Dorsolateral prefrontal cortex (tissue), 120 donors: ENCODE measurements at regions of chr10 and their contacts with region 1.

Region 1: DNA sequence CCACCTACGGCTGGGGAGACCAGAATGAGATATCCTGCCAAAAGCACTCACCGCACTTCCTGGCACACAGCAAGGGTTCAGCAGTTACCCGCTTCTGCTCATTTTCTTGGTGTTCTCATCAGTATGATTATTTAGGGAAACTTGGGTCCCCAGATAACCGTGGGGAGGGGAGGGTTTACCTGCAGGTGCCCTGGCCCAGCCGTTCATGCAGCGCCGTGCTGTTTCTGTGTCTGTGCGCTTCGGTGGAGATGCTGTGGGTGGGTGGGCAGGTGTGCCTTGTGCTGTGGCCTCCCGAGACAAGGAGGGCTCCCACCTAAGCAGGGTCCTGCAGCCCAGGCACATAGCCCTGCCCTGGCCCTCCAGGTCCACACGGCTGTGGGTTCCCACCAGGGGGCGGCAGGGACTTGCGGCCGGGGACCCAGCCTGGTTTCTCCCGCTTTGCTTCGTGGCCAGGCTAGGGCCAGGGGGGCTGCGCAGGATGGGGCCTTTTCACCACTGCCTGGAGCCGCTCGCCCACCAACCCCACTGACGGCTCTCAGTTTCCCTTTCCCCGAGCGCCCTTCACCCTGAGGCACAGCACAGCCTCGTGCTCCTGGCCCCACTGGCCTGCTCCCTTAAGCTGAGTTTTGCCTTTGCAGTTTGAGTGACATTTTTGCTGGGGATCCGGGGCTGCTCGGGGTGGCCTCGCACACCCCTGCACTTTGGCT is 78.5 kb downstream of the LHPP start:
- DNase-seq: peak in 7 of 10 donors; percentile 55 to 81 (median 63)
- H3K4me3 ChIP-seq: no peak overlapping the region
- H3K27ac ChIP-seq: peak overlapping the region in 27 of 59 donors; percentile 3 to 79 (median 42)
- H3K27me3 ChIP-seq: no peaks in the 10 kb centered on the region
- CTCF ChIP-seq: peak; percentile 16 to 93 (median 72)

Region 2: DNA sequence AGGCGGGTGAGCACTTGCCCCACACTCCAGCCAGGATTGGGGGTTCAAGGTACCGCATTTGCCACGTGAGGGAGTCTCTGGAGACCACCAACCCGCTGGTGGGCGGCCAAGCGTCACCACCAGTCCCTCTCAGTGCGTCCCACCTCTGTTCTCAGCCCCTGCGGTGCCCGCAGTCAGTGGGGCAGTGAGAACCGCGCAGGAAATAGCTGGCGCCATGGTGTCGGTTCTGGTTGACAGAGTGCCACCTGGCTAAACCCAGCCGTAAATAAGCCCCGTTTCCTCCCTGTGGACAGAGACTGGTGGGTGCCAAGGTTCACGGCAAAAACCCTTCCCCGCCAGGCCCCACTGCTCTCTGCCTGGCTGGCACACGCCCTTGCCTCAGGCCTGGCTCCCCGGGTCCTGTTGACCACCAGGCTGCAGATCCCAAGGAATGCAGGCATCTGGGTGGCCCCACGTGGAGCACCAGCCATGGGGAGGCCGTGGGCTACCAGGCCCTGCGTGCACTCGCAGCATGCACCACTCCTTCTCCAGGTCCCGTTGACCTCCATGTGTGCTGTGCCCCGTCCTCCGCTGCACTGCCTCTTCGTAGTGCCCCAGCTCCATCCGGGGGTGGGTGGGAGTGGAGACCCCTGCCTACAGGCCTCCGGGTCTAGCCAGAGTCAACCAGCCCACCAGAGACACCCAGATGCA is 61.5 kb after region 1 on chr10:
- intact Hi-C with region 1: loop called in 1 of 2 experiments (anchors 5 kb)
- DNase-seq: peak in 1 of 10 donors; percentile 27
- H3K4me3 ChIP-seq: no peak overlapping the region
- H3K27ac ChIP-seq: peak overlapping the region in 6 of 59 donors; percentile 31 to 100 (median 99)
- H3K27me3 ChIP-seq: no peaks in the 10 kb centered on the region
- CTCF ChIP-seq: no peak

Region 3: DNA sequence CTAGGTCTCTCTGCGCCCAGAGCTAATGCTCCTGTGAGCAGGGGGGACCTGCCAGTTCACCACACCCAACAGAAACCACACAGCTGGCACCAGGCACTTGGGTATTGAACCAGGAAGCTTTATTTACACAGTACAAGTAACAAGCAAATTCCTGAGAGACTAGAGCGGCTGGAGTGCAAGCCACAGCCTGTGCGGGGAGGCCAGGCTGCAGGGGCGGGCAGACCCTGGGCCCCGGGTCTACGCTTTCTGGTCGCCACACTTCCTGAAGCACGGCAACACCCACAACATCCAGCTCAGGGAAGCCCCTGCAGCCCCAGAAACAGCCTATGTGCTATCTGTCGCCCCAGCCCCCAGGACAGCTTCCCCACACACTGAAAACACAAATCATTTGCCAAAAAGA is 79.1 kb after region 1 on chr10:
- intact Hi-C with region 1: loop called in 1 of 2 experiments (anchors 5 kb)
- DNase-seq: no peak
- H3K4me3 ChIP-seq: no peak overlapping the region
- H3K27ac ChIP-seq: peak overlapping the region in 56 of 59 donors; percentile 56 to 98 (median 92)
- H3K27me3 ChIP-seq: no peaks in the 10 kb centered on the region
- CTCF ChIP-seq: no peak